A673 (cell line): ENCODE measurements at regions of chr6 and their contacts with region 1.

Region 1: DNA sequence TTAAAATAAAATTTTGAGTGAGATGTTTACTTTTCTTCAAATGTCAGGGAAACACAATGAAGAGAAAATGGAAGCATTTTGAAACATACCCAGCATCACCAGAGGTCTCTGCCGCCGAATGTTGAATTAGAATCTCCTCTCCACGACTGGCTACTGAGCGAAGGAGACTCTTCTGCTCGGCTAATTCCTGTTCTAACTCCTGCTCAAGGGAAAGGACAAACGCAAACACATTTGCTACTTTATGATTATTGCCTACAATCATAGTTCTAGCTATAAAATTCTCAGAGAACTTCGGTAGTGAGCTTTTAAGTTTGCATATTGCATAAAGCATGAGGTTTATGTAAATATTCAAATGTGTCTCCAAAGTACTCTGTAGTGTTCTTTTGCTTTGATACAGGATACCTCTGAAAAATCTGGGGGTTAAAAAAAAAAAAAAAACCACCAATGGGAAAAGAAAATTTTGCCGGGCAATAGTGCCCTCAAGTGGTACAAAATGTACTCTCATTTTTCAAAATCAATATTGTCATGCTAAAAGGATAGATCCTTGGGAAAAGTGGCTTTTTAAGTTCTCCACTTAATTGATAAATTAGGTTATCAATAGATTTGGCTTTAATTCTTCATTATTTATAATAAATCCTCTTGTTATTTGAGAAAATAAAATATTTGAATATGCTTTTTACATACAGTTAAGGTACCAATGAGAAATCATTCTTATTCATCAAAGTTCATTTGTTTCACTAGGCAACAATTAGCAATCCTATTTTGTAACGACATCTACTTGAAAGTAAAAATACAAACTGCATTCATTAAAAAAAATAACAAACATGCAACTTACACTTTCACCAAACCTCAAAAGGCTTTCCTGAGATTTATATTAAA is 369.0 kb downstream of the SYNE1 start:
- DNase-seq: peak; percentile 52
- H3K4me3 ChIP-seq: no peak overlapping the region
- H3K27ac ChIP-seq: no peak overlapping the region
- H3K4me1 ChIP-seq: peaks cover 38% of the 10 kb centered on the region
- H3K27me3 ChIP-seq: no peaks in the 10 kb centered on the region
- CTCF ChIP-seq: peak; percentile 75

Region 2: GRCh38 chr6:151430886-151431285 is 837.3 kb before region 1 on chr6:
- CTCF ChIA-PET with region 1: no interaction called
- POLR2A ChIA-PET with region 1: no interaction called
- intact Hi-C with region 1: loop called (anchors 5 kb)
- DNase-seq: peak; percentile 50
- H3K4me3 ChIP-seq: no peak overlapping the region
- H3K27ac ChIP-seq: peak overlapping the region; percentile 16
- H3K4me1 ChIP-seq: peaks cover 18% of the 10 kb centered on the region
- H3K27me3 ChIP-seq: no peaks in the 10 kb centered on the region
- CTCF ChIP-seq: peak; percentile 47

Region 3: DNA sequence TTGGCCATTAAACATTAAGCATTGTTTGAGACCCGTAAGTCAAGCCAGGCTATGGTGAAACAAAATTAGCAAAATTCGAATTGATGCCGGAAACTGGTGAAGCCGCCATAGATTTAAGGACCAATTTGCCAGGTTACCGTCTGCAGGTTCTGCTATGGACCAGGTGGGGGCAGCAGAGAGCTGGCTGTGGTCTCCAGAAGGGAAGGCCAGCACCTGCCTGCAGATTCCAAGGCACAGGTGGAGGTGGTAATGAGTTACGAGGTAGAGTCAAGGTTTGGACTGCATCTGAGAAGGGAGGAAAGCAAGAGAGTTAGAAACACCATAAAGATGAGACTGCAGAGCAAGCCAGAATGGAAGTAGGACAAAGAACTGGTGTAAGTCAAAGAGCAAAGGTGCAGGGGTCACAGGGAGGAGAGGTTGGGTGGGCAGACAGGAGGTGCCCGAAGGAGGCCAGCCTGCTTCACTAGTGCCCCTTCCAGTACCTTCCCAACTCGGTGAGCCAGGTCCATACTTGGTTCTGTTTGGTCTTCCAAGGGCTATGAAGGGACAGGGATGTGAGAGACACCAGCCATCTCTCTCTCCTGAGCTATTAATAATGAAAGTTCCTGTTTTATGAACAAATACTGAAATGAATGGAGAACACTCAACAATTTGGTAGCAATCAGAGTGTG is 592.3 kb before region 1 on chr6:
- CTCF ChIA-PET with region 1: no interaction called
- POLR2A ChIA-PET with region 1: no interaction called
- intact Hi-C with region 1: loop called (anchors 2 kb)
- DNase-seq: peak; percentile 43
- H3K4me3 ChIP-seq: no peak overlapping the region
- H3K27ac ChIP-seq: no peak overlapping the region
- H3K4me1 ChIP-seq: no peaks in the 10 kb centered on the region
- H3K27me3 ChIP-seq: no peaks in the 10 kb centered on the region
- CTCF ChIP-seq: peak; percentile 98